ENCODE measurements at regions of chr2 and their contacts with region 1.

Region 1: GRCh38 chr2:64750817-64751285 is 97.1 kb upstream of the SERTAD2 start:
- DNase-seq: peak; percentile 98
- ATAC-seq: peak; percentile 87
- H3K4me3 ChIP-seq: peak overlapping the region; percentile 67 to 71
- H3K27ac ChIP-seq: peak overlapping the region; percentile 75
- H3K4me1 ChIP-seq: peaks cover 36 to 60% of the 10 kb centered on the region in 2 experiments
- H3K27me3 ChIP-seq: no peaks in the 10 kb centered on the region
- CTCF ChIP-seq: no peak
- POLR2A ChIP-seq: peak; percentile 81
- RAD21 ChIP-seq: 0 out of 2 replicates have a peak, but pooled peaks have one; percentile 31

Region 2: DNA sequence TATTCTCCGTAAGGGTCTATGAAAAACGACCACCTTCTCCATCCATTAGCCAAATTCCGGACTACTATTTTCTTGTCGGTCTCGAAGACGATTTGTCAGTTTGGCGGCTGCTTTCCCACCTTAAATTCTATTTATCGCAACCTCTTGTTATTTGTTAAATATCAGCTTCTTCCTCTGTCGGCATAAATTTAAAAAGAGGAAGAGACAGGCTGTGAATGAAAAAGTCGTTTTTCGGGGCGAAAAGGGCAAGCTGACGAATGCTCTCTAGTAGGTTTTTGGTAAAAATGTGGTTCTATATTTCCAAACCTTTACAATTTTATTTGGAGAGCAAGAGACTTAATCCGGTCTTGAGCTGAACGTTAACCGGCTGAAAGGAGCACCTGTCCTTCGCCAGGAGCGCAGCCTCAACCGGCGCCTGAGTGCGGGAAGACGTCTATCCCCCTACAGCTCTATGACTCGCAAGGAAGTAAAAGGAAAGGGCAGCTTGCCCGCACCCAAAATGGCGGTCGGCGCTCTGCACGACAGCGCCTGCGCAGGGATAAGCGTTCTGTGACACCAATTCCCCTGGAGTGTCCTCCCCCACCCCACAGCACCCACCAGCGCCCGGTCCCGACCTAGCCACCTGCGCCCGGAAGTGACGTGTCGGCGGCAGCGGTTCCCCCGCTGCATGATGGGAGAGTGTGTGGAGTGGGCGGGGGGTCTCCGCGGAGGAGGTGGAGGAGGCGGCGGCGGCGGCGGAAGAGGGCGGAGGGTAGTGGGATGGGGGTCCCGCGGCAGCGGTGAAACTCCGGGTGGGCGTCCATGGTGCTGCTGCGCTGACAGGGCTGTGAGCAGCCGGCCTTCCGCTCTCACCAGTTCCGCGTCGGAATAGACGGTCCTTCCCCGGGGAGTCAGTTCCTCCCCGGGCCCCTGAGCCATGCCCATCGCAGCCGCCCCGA is 226.9 kb before region 1 on chr2 and contains the start of gene AFTPH:
- CTCF ChIA-PET with region 1: no interaction called
- POLR2A ChIA-PET with region 1: no interaction called
- RAD21 ChIA-PET with region 1: no interaction called
- intact Hi-C with region 1: loop called (anchors 2 kb)
- DNase-seq: peak; percentile 96
- ATAC-seq: peak; percentile 95
- H3K4me3 ChIP-seq: peak within 1 kb of the TSS; percentile 70 to 91
- H3K27ac ChIP-seq: peak within 1 kb of the TSS; percentile 78
- H3K4me1 ChIP-seq: peaks cover 6 to 20% of the 10 kb centered on the region in 2 experiments; a peak in 3 of 4 replicates
- H3K27me3 ChIP-seq: no peaks in the 10 kb centered on the region
- CTCF ChIP-seq: no peak
- POLR2A ChIP-seq: peak; percentile 75
- RAD21 ChIP-seq: no peak
- total RNA-seq, gene AFTPH: 23.6 TPM

Region 3: GRCh38 chr2:64653349-64654062 is 97.3 kb before region 1 on chr2 and contains the start of gene SERTAD2:
- CTCF ChIA-PET with region 1: interaction called, 4 read pairs
- POLR2A ChIA-PET with region 1: interaction called, 21 read pairs
- RAD21 ChIA-PET with region 1: interaction called, 3 read pairs
- intact Hi-C with region 1: loop called (anchors 2 kb)
- DNase-seq: no peak
- ATAC-seq: peak; percentile 78
- H3K4me3 ChIP-seq: peak within 1 kb of the TSS; percentile 74 to 79
- H3K27ac ChIP-seq: peak within 1 kb of the TSS; percentile 80
- H3K4me1 ChIP-seq: peaks cover 51 to 68% of the 10 kb centered on the region in 2 experiments
- H3K27me3 ChIP-seq: no peaks in the 10 kb centered on the region
- CTCF ChIP-seq: no peak; a peak in 1 of 6 replicates
- POLR2A ChIP-seq: peak; percentile 75
- RAD21 ChIP-seq: 0 out of 2 replicates have a peak, but pooled peaks have one; percentile 15
- total RNA-seq, gene SERTAD2: 80.1 TPM

Region 4: GRCh38 chr2:64767670-64768468 is 17.0 kb after region 1 on chr2:
- CTCF ChIA-PET with region 1: interaction called, 4 read pairs
- POLR2A ChIA-PET with region 1: interaction called, 15 read pairs
- RAD21 ChIA-PET with region 1: interaction called in 1 of 2 experiments, 5 read pairs
- intact Hi-C with region 1: no loop called
- DNase-seq: no peak
- ATAC-seq: peak; percentile 82
- H3K4me3 ChIP-seq: peak overlapping the region; percentile 49 to 54
- H3K27ac ChIP-seq: peak overlapping the region; percentile 98
- H3K4me1 ChIP-seq: peaks cover 32 to 51% of the 10 kb centered on the region in 2 experiments
- H3K27me3 ChIP-seq: no peaks in the 10 kb centered on the region
- CTCF ChIP-seq: no peak
- POLR2A ChIP-seq: peak; percentile 43
- RAD21 ChIP-seq: peak; percentile 39

Region 5: DNA sequence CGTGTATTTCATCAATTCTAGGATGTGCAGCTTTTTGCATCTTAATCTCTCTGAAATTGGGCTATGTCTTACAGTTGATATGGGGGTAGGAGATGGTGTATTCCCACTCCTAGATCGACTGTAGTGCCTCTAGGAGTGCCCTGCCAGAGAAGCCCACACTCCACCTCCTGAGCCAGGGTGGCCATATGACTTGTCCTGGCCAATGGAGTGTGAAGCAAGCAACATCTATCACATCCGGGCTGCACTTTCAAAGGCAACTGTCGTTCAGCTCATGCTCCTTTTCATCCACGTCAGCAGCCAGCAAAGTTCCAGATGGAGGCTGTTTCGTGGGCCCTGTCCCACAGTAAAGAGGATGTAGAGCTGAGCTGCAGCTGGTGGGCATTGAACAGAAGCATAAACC is 89.0 kb after region 1 on chr2:
- CTCF ChIA-PET with region 1: interaction called, 3 read pairs
- POLR2A ChIA-PET with region 1: interaction called, 33 read pairs
- RAD21 ChIA-PET with region 1: interaction called, 5 to 11 read pairs
- intact Hi-C with region 1: loop called (anchors 2 kb)
- DNase-seq: peak; percentile 35
- ATAC-seq: peak; percentile 30
- H3K4me3 ChIP-seq: no peak overlapping the region
- H3K27ac ChIP-seq: peak overlapping the region; percentile 91
- H3K4me1 ChIP-seq: peaks cover 62 to 75% of the 10 kb centered on the region in 2 experiments
- H3K27me3 ChIP-seq: no peaks in the 10 kb centered on the region
- CTCF ChIP-seq: no peak
- POLR2A ChIP-seq: peak; percentile 44
- RAD21 ChIP-seq: no peak

Region 6: GRCh38 chr2:64865073-64865830 is 114.4 kb after region 1 on chr2:
- CTCF ChIA-PET with region 1: interaction called, 7 read pairs
- POLR2A ChIA-PET with region 1: interaction called, 16 read pairs
- RAD21 ChIA-PET with region 1: no interaction called
- intact Hi-C with region 1: loop called (anchors 1 kb)
- DNase-seq: no peak
- ATAC-seq: peak; percentile 91
- H3K4me3 ChIP-seq: peak overlapping the region; percentile 45 to 64
- H3K27ac ChIP-seq: peak overlapping the region; percentile 83
- H3K4me1 ChIP-seq: peaks cover 17 to 70% of the 10 kb centered on the region in 2 experiments
- H3K27me3 ChIP-seq: no peaks in the 10 kb centered on the region
- CTCF ChIP-seq: peak in 2 of 3 experiments; percentile 44 to 50; a peak in 4 of 6 replicates
- POLR2A ChIP-seq: no peak
- RAD21 ChIP-seq: no peak

Region 7: DNA sequence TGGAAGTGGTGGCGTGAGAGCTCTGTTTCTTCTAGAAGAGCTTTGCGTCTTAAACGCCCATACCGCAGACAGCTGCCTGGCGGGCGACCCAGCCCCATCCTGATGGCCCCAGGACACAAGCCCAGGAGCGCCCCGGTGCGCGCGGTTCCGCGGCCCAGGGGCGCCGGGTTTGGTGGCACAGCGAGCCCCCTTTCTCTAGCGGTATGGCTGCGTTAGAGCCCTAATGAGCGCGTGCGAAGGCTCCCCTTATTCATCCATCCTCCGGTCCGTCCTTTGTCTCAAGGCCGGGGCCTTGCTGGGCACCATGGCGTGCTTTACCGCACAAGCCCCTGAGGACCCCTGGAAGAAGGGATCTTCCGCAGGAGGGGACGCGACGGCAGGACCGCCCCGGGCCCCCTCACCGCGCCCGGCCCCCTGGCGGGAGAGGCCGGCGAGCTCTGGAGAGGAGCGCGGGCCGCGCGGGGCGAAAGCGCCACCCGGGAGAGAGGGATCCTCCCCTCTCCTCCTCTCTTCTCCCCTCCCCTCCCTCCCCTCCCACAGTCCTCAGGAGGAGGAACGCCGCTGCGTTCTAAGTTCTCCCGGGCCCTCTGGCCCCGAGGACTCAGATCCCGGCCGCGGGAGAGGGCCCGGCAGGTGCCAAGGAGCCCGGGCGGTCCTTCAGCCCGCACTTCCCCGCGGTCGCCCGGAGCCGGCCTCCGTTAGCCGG is 237.7 kb after region 1 on chr2:
- CTCF ChIA-PET with region 1: no interaction called
- POLR2A ChIA-PET with region 1: no interaction called
- RAD21 ChIA-PET with region 1: no interaction called
- intact Hi-C with region 1: no loop called
- DNase-seq: peak; percentile 19
- ATAC-seq: peak; percentile 84
- H3K4me3 ChIP-seq: peak overlapping the region; percentile 39 to 67
- H3K27ac ChIP-seq: peak overlapping the region; percentile 24; the same call in 1 of the 2 replicates
- H3K4me1 ChIP-seq: peaks cover 0 to 18% of the 10 kb centered on the region in 2 experiments; a peak in 2 of 4 replicates
- H3K27me3 ChIP-seq: peaks cover 3% of the 10 kb centered on the region; the same call in 1 of the 2 replicates
- CTCF ChIP-seq: peak; percentile 8 to 42 (median 23); a peak in 4 of 6 replicates
- POLR2A ChIP-seq: no peak
- RAD21 ChIP-seq: no peak

Region 8: DNA sequence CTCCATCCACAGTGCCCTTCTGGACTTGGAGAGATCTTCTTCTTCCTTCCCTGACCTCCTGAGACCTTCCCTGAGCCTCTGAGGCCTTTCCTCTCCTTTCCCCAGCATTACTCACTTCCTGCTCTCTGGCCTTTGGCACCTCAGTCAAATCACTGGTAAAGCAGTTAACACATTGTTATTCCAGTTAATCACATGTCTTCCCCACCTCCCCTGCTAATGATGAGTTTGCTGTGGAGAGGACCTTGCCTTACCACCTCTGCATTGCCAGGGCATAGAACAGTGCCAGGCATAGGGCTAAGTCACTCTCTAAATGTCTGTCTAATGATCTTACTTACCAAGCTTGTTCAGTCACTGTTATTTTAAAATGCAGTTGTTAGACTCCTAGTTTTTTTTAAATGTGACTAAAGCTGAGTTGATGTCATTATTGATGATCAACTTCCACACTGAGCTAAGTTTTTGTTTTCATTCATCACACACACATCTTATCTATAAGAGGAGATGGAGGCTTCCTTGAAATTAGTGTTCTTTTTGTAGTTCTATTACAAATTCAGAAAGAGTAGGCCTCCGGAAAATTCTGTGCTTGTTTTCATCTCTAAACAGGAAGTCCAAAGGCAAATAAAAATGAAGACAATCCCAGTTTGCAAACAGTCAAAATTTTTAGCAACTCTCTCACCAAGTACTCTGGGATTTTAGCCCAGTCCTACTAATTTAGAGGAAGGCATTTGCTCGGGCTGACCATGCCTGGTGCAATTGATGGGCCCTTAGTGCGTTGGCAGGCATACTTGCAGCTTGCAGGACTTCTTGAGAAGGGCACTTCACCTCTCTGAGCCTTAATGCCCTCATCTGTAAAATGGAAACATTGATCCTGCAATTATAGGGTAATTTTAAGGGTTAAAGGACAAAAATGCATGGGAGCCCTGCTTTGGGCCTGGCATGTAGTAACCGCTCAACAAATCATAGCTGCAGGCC is 795.3 kb after region 1 on chr2:
- CTCF ChIA-PET with region 1: no interaction called
- POLR2A ChIA-PET with region 1: no interaction called
- RAD21 ChIA-PET with region 1: no interaction called
- intact Hi-C with region 1: no loop called
- DNase-seq: no peak
- ATAC-seq: peak; percentile 49
- H3K4me3 ChIP-seq: no peak overlapping the region; a peak in 1 of 4 replicates
- H3K27ac ChIP-seq: no peak overlapping the region; the same call in 1 of the 2 replicates
- H3K4me1 ChIP-seq: peaks cover 8 to 18% of the 10 kb centered on the region in 2 experiments
- H3K27me3 ChIP-seq: no peaks in the 10 kb centered on the region
- CTCF ChIP-seq: no peak
- POLR2A ChIP-seq: no peak
- RAD21 ChIP-seq: no peak

Measured in HCT116 (cell line).